CD4-positive, alpha-beta T cell (primary cell): ENCODE measurements at regions of chr4 and their contacts with region 1.

Region 1: GRCh38 chr4:83110223-83110945 is 4.1 kb downstream of the PLAC8 start:
- DNase-seq: peak; percentile 79 to 94 (median 86)
- ATAC-seq: peak; percentile 76
- H3K4me3 ChIP-seq: peak overlapping the region; percentile 83
- H3K4me3 Mint-ChIP-seq: peak overlapping the region; percentile 88
- H3K27ac ChIP-seq: peak overlapping the region; percentile 44 to 65
- H3K27ac Mint-ChIP-seq: peak overlapping the region; percentile 89
- H3K4me1 ChIP-seq: peaks cover 45% of the 10 kb centered on the region
- H3K4me1 Mint-ChIP-seq: peaks cover 64% of the 10 kb centered on the region
- H3K27me3 ChIP-seq: no peaks in the 10 kb centered on the region
- H3K27me3 Mint-ChIP-seq: no peaks in the 10 kb centered on the region
- CTCF ChIP-seq: peak; percentile 85

Region 2: DNA sequence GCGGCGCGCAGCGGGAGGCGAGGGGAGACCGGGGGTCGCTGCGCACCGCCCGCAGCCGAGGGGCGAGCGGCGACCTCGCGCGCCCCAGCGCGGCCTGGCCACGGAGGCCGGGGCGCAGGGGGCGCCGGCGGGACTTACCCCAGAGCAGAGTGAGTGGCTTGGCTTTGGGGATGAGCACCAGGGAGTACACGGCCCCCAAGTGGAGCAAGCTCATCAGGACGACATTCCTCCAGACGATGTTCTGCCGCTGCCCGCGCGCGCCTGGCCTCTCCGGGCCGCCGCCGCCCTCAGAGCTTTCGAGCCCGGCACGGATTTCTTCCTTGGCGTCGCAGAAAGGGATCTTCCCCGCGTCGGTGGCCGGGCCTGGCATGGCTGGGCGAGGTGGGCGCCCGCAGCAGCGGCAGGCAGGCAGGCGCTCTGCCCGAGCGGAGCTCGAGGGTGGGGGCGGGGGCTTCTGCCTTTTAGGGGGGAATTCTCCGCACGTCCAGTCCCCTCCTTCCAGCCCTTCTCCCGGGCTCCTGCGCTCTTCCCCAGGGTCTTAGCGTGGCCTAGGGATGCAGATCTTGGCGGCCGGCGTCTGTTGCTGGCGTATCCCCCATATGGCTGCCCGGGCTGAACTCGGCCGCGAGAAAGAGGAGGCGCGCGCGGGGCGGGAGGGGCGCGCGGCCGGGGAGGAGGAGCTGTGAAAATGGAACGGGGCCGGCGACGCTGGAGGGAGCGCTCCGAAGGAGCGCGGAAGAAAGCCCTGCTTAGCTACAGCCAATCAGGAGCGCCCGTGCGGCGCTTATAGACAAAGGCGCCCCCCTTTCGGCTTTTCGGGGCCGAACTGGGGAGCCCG is 312.0 kb before region 1 on chr4 and contains the start of gene SCD5:
- CTCF ChIA-PET with region 1: no interaction called
- POLR2A ChIA-PET with region 1: no interaction called
- intact Hi-C with region 1: no loop called
- DNase-seq: peak in 10 of 14 experiments; percentile 2 to 82 (median 30)
- ATAC-seq: peak; percentile 83
- H3K4me3 ChIP-seq: peak within 1 kb of the TSS; percentile 55
- H3K4me3 Mint-ChIP-seq: peak within 1 kb of the TSS; percentile 88
- H3K27ac ChIP-seq: no peak within 1 kb of the TSS
- H3K27ac Mint-ChIP-seq: no peak within 1 kb of the TSS
- H3K4me1 ChIP-seq: peaks cover 27% of the 10 kb centered on the region
- H3K4me1 Mint-ChIP-seq: peaks cover 22% of the 10 kb centered on the region
- H3K27me3 ChIP-seq: peaks cover 35 to 46% of the 10 kb centered on the region in 2 experiments
- H3K27me3 Mint-ChIP-seq: peaks cover 63% of the 10 kb centered on the region
- CTCF ChIP-seq: no peak
- total RNA-seq, gene SCD5: 0.14 to 0.25 TPM

Region 3: GRCh38 chr4:83028976-83029375 is 81.4 kb before region 1 on chr4:
- CTCF ChIA-PET with region 1: no interaction called
- POLR2A ChIA-PET with region 1: no interaction called
- intact Hi-C with region 1: no loop called
- DNase-seq: no peak
- ATAC-seq: no peak
- H3K4me3 ChIP-seq: no peak overlapping the region
- H3K4me3 Mint-ChIP-seq: no peak overlapping the region
- H3K27ac ChIP-seq: no peak overlapping the region
- H3K27ac Mint-ChIP-seq: no peak overlapping the region
- H3K4me1 ChIP-seq: peaks cover 2% of the 10 kb centered on the region
- H3K4me1 Mint-ChIP-seq: no peaks in the 10 kb centered on the region
- H3K27me3 ChIP-seq: no peaks in the 10 kb centered on the region
- H3K27me3 Mint-ChIP-seq: peaks cover 11% of the 10 kb centered on the region
- CTCF ChIP-seq: no peak

Region 4: GRCh38 chr4:83074086-83074704 is 36.2 kb before region 1 on chr4:
- CTCF ChIA-PET with region 1: interaction called, 10 read pairs
- POLR2A ChIA-PET with region 1: interaction called, 11 read pairs
- intact Hi-C with region 1: loop called (anchors 1 to 5 kb)
- DNase-seq: peak in 9 of 14 experiments; percentile 26 to 93 (median 59)
- ATAC-seq: peak; percentile 95
- H3K4me3 ChIP-seq: peak overlapping the region; percentile 13
- H3K4me3 Mint-ChIP-seq: peak overlapping the region; percentile 68
- H3K27ac ChIP-seq: no peak overlapping the region
- H3K27ac Mint-ChIP-seq: peak overlapping the region; percentile 69
- H3K4me1 ChIP-seq: peaks cover 8% of the 10 kb centered on the region
- H3K4me1 Mint-ChIP-seq: peaks cover 13% of the 10 kb centered on the region
- H3K27me3 ChIP-seq: no peaks in the 10 kb centered on the region
- H3K27me3 Mint-ChIP-seq: no peaks in the 10 kb centered on the region
- CTCF ChIP-seq: peak; percentile 77

Region 5: DNA sequence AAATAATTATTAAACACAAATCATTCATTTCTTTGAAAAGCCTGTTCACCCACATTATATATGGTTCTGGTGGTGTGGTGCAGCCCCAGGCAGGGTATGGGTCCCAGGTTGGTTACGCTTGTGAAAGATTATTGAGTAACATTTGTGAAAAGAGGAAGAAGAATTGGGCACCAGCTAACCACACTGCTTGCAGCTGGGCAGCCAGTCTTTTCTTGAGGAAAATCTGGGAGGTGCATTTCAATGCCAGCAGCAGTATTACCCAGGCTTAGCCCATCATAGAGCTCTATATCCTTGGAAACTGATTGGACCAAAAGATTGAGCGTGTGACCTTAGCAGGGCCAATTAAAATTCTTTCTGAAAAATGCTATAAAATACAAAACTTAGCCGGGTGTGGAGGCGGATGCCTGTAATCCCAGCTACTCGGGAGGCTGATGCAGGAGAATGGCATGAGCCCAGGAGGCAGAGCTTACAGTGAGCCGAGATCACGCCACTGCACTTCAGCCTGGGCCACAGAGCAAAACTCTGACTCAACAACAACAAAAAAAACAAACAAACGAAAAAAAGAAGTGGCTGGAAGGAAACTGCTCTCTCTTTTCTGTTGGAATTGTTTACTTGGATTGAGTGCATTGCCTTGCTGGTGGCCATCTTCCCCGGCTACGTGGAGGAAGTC is 13.9 kb after region 1 on chr4:
- CTCF ChIA-PET with region 1: interaction called, 7 read pairs
- POLR2A ChIA-PET with region 1: interaction called, 41 read pairs
- intact Hi-C with region 1: loop called in 1 of 2 experiments (anchors 2 kb)
- DNase-seq: peak in 3 of 14 experiments; percentile 15 to 47 (median 44)
- ATAC-seq: no peak
- H3K4me3 ChIP-seq: no peak overlapping the region
- H3K4me3 Mint-ChIP-seq: no peak overlapping the region
- H3K27ac ChIP-seq: no peak overlapping the region
- H3K27ac Mint-ChIP-seq: no peak overlapping the region
- H3K4me1 ChIP-seq: peaks cover 10% of the 10 kb centered on the region
- H3K4me1 Mint-ChIP-seq: peaks cover 16% of the 10 kb centered on the region
- H3K27me3 ChIP-seq: no peaks in the 10 kb centered on the region
- H3K27me3 Mint-ChIP-seq: no peaks in the 10 kb centered on the region
- CTCF ChIP-seq: no peak

Region 6: GRCh38 chr4:83217721-83218522 is 107.5 kb after region 1 on chr4:
- CTCF ChIA-PET with region 1: no interaction called
- POLR2A ChIA-PET with region 1: interaction called, 167 read pairs
- intact Hi-C with region 1: loop called (anchors 1 to 5 kb)
- DNase-seq: peak; percentile 35 to 94 (median 54)
- ATAC-seq: peak; percentile 89
- H3K4me3 ChIP-seq: peak overlapping the region; percentile 17
- H3K4me3 Mint-ChIP-seq: peak overlapping the region; percentile 74
- H3K27ac ChIP-seq: peak overlapping the region; percentile 74 to 76
- H3K27ac Mint-ChIP-seq: peak overlapping the region; percentile 89
- H3K4me1 ChIP-seq: peaks cover 69% of the 10 kb centered on the region
- H3K4me1 Mint-ChIP-seq: peaks cover 71% of the 10 kb centered on the region
- H3K27me3 ChIP-seq: no peaks in the 10 kb centered on the region
- H3K27me3 Mint-ChIP-seq: no peaks in the 10 kb centered on the region
- CTCF ChIP-seq: no peak

Region 7: GRCh38 chr4:83259586-83259985 is 149.2 kb after region 1 on chr4:
- CTCF ChIA-PET with region 1: interaction called, 23 read pairs
- POLR2A ChIA-PET with region 1: interaction called, 16 read pairs
- intact Hi-C with region 1: loop called in 1 of 2 experiments (anchors 2 kb)
- DNase-seq: no peak
- ATAC-seq: no peak
- H3K4me3 ChIP-seq: no peak overlapping the region
- H3K4me3 Mint-ChIP-seq: no peak overlapping the region
- H3K27ac ChIP-seq: no peak overlapping the region
- H3K27ac Mint-ChIP-seq: no peak overlapping the region
- H3K4me1 ChIP-seq: peaks cover 5% of the 10 kb centered on the region
- H3K4me1 Mint-ChIP-seq: peaks cover 6% of the 10 kb centered on the region
- H3K27me3 ChIP-seq: no peaks in the 10 kb centered on the region
- H3K27me3 Mint-ChIP-seq: no peaks in the 10 kb centered on the region
- CTCF ChIP-seq: no peak

Region 8: DNA sequence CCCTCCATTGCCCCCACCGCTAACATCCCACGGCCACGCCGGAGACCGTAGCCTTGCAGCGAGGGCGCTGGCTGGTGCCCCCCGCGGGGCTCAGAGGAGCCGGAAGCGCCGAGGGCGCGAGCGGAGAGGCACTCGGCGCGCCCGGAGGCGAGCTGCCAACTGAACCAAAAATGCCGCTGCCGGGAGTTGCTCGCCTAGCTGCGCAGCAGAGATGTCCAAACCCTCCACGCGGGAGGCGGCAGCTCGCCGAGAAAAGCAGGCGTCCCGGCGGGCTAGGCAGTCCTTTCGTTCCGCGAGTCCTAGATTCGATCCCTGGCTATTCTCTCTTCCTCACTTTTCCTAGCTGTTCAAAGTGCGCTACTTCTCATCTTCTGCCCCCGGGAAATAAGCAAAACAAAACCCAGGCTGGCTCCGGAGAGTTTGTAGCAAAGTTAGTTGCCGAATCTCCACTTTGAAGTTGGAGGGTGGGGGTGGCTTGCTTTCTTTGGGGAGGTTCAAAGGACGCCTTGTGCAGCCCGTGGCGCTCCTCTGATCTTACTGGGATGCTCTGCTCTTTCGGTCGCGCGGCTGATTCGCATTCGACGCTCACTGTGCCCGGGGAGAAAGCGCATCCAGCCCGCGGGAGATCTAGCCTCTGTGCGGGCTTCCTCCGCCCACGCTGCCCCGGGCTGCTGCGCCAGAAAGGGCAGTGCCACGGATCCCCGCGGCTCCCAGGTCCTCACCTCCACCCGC is 1388.0 kb after region 1 on chr4:
- CTCF ChIA-PET with region 1: no interaction called
- POLR2A ChIA-PET with region 1: no interaction called
- intact Hi-C with region 1: no loop called
- DNase-seq: peak in 3 of 14 experiments; percentile 30 to 39 (median 32)
- ATAC-seq: peak; percentile 52
- H3K4me3 ChIP-seq: peak overlapping the region; percentile 42
- H3K4me3 Mint-ChIP-seq: peak overlapping the region; percentile 84
- H3K27ac ChIP-seq: no peak overlapping the region
- H3K27ac Mint-ChIP-seq: peak overlapping the region; percentile 21
- H3K4me1 ChIP-seq: peaks cover 36% of the 10 kb centered on the region
- H3K4me1 Mint-ChIP-seq: peaks cover 22% of the 10 kb centered on the region
- H3K27me3 ChIP-seq: peaks cover 85 to 100% of the 10 kb centered on the region in 2 experiments
- H3K27me3 Mint-ChIP-seq: peaks cover 95% of the 10 kb centered on the region
- CTCF ChIP-seq: no peak